Activated B cell treated with CpG ODN at 0.5 μM for 24 hours (primary cell): ENCODE measurements at regions of chr1 and their contacts with region 1.

Region 1: DNA sequence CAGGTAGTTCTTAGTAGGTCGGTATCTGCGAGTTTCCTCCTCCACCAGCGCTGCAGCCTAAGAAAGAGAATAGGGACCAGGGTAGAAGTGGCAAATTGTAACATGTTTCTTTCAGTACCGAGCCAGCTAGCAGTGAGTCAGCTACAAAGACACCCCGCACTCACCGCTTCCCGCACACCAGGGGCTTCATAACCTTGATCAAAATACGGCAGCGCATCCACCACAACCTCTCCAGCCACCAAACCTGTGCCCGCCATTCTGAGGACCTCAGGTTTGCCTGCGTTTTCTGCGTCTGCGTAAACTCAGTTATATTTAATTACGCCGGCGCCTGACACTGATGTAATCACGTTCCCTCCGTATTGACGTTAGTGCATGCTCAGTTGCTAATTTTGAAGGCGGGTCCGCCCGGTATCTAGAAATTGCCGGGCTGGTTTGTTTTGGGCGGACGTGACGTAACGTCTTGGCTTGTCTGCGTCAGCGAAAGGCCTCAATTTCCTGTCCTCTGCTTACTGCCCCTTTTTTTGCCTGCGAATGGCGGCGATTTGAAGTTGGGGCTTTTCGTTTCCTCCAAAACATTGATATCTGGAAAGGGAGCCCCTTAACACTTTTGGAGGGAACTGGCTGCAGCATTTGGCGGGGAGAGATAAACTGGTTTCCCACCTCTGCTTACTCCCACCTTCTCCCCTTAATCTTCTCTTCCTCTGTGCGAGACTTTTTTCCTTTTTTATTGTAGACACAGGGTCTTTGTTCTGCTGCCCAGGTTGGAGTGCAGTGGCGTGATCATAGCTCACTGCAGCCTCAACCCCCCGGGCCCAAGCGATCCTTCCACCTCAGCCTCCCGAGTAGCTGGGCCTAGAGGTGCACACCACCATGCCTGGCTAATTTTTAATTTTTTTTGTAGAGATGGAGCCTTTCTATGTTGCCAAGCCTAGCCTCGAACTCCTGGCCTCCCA is at the start of gene BCAS2:
- DNase-seq: peak; percentile 81
- ATAC-seq: peak; percentile 97
- H3K4me3 Mint-ChIP-seq: peak within 1 kb of the TSS; percentile 99
- H3K27ac Mint-ChIP-seq: peak within 1 kb of the TSS; percentile 98
- H3K4me1 Mint-ChIP-seq: peaks cover 29% of the 10 kb centered on the region
- H3K27me3 Mint-ChIP-seq: peaks cover 2% of the 10 kb centered on the region
- CTCF ChIP-seq: no peak
- total RNA-seq, gene BCAS2: 33.1 and 36.3 TPM in 2 replicates

Region 2: GRCh38 chr1:113904674-113905434 is 676.8 kb before region 1 on chr1 and contains the starts of genes AP4B1 and DCLRE1B:
- CTCF ChIA-PET with region 1: no interaction called
- POLR2A ChIA-PET with region 1: no interaction called
- intact Hi-C with region 1: loop called (anchors 1 kb)
- DNase-seq: peak; percentile 89
- ATAC-seq: peak; percentile 91
- H3K4me3 Mint-ChIP-seq: peak within 1 kb of the TSS; percentile 94
- H3K27ac Mint-ChIP-seq: peak within 1 kb of the TSS; percentile 95
- H3K4me1 Mint-ChIP-seq: peaks cover 51% of the 10 kb centered on the region
- H3K27me3 Mint-ChIP-seq: no peaks in the 10 kb centered on the region
- CTCF ChIP-seq: no peak
- total RNA-seq, gene AP4B1: 48.5 and 69.9 TPM in 2 replicates
- total RNA-seq, gene DCLRE1B: 5.4 and 6.0 TPM in 2 replicates

Region 3: DNA sequence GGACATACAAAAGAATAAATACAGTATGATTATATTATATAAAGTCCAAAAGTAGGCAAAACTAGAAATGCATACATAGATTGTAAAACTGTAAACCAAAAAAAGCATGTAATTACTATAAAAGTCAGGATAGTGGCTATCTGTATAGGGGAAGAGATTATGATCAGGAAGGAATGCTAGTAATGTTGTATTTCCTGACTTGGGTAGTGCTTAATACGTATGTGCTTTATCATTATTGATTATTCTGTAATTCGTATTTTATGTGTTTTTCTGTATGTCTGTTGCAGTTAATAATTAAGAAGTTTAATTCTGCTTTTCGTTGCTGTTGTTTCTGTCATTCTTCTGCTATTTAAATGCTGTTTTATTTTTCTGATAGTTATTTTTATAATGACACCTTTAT is 41.4 kb before region 1 on chr1:
- CTCF ChIA-PET with region 1: no interaction called
- POLR2A ChIA-PET with region 1: no interaction called
- intact Hi-C with region 1: no loop called
- DNase-seq: no peak
- ATAC-seq: no peak
- H3K4me3 Mint-ChIP-seq: no peak overlapping the region
- H3K27ac Mint-ChIP-seq: no peak overlapping the region
- H3K4me1 Mint-ChIP-seq: no peaks in the 10 kb centered on the region
- H3K27me3 Mint-ChIP-seq: peaks cover 5% of the 10 kb centered on the region
- CTCF ChIP-seq: no peak

Region 4: GRCh38 chr1:114558544-114558943 is 23.1 kb before region 1 on chr1:
- CTCF ChIA-PET with region 1: no interaction called
- POLR2A ChIA-PET with region 1: interaction called, 5 read pairs
- intact Hi-C with region 1: loop called (anchors 2 kb)
- DNase-seq: no peak
- ATAC-seq: peak; percentile 59
- H3K4me3 Mint-ChIP-seq: no peak overlapping the region
- H3K27ac Mint-ChIP-seq: peak overlapping the region; percentile 62
- H3K4me1 Mint-ChIP-seq: peaks cover 34% of the 10 kb centered on the region
- H3K27me3 Mint-ChIP-seq: no peaks in the 10 kb centered on the region
- CTCF ChIP-seq: no peak

Region 5: DNA sequence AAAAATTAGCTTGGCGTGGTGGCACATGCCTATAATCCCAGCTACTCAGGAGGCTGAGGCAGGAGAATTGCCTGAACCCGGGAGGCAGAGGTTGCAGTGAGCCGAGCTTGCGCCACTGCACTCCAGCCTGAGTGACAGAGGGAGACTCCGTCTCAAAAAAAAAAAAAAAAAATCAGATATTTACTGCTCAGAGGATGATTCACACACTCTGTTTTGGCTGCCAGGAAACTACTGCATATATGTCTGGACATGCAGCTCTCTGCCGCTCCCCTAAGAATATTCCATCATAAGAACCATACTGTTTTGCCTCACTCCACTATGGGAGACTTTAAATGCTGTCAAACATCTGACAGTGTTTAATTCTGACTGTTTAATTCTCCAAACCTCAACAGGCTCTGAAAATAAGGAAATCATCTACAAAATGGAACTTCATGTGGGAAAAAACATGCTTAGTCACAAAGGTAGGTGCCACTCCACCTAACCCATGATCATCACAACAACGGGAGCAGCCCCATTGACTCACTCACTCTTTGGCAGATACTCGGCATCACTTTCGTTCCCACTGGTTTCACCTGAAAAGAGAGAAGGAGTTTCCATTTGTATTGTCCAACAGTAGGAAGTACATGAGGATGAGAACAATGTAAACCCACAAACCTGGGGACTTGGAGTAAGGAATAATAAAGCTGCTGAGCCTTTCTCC is 29.1 kb after region 1 on chr1:
- CTCF ChIA-PET with region 1: no interaction called
- POLR2A ChIA-PET with region 1: no interaction called
- intact Hi-C with region 1: no loop called
- DNase-seq: no peak
- ATAC-seq: no peak
- H3K4me3 Mint-ChIP-seq: no peak overlapping the region
- H3K27ac Mint-ChIP-seq: no peak overlapping the region
- H3K4me1 Mint-ChIP-seq: no peaks in the 10 kb centered on the region
- H3K27me3 Mint-ChIP-seq: peaks cover 18% of the 10 kb centered on the region
- CTCF ChIP-seq: no peak

Region 6: GRCh38 chr1:114716304-114717170 is 134.9 kb after region 1 on chr1 and contains the start of gene NRAS:
- CTCF ChIA-PET with region 1: interaction called, 4 read pairs
- POLR2A ChIA-PET with region 1: interaction called, 18 read pairs
- intact Hi-C with region 1: loop called (anchors 1 kb)
- DNase-seq: peak; percentile 97
- ATAC-seq: peak; percentile 94
- H3K4me3 Mint-ChIP-seq: peak within 1 kb of the TSS; percentile 99
- H3K27ac Mint-ChIP-seq: peak within 1 kb of the TSS; percentile 98
- H3K4me1 Mint-ChIP-seq: peaks cover 28% of the 10 kb centered on the region
- H3K27me3 Mint-ChIP-seq: no peaks in the 10 kb centered on the region
- CTCF ChIP-seq: no peak
- total RNA-seq, gene NRAS: 53.3 and 55.5 TPM in 2 replicates

Region 7: DNA sequence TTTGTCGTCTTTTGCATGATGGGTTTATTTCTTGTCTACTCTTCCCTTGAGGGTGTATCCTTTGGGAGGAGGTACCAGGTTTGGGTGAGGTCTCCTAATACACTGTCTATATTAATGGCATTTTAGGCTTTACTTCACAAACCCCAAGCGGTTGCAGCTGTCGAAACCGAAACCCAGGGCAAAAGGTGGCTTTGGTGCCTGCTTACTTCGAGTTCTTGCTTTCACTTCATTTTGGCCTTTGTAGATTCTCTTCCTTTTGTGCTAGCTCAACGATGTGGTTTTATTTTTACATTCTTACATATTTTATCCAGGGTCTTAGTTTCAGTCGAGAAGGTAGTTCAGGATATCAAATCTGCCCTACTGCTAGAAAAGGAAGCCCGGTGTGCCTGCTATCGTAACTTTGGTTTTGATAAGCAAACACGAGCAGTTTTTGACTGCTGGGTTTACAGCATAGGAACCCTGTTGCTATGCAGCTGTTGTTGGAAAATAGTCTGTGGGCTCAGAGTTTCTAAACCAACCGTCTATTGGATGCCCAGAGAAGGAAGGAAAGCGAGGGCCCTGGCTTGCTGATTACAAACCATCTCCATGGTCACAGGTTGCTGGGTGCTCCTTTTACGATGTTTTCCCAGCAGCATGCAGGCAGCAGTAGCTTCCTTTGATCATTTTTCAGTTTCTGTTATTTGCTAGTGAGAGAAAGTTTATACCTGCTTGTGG is 517.5 kb after region 1 on chr1:
- CTCF ChIA-PET with region 1: no interaction called
- POLR2A ChIA-PET with region 1: no interaction called
- intact Hi-C with region 1: loop called (anchors 5 kb)
- DNase-seq: peak; percentile 34
- ATAC-seq: peak; percentile 86
- H3K4me3 Mint-ChIP-seq: peak overlapping the region; percentile 88
- H3K27ac Mint-ChIP-seq: peak overlapping the region; percentile 99
- H3K4me1 Mint-ChIP-seq: peaks cover 29% of the 10 kb centered on the region
- H3K27me3 Mint-ChIP-seq: no peaks in the 10 kb centered on the region
- CTCF ChIP-seq: no peak